ACHN (cell line): ENCODE measurements at regions of chr11 and their contacts with region 1.

Region 1: GRCh38 chr11:128630367-128631230 is 43.2 kb upstream of the ETS1 start:
- DNase-seq: peak; percentile 69

Region 2: DNA sequence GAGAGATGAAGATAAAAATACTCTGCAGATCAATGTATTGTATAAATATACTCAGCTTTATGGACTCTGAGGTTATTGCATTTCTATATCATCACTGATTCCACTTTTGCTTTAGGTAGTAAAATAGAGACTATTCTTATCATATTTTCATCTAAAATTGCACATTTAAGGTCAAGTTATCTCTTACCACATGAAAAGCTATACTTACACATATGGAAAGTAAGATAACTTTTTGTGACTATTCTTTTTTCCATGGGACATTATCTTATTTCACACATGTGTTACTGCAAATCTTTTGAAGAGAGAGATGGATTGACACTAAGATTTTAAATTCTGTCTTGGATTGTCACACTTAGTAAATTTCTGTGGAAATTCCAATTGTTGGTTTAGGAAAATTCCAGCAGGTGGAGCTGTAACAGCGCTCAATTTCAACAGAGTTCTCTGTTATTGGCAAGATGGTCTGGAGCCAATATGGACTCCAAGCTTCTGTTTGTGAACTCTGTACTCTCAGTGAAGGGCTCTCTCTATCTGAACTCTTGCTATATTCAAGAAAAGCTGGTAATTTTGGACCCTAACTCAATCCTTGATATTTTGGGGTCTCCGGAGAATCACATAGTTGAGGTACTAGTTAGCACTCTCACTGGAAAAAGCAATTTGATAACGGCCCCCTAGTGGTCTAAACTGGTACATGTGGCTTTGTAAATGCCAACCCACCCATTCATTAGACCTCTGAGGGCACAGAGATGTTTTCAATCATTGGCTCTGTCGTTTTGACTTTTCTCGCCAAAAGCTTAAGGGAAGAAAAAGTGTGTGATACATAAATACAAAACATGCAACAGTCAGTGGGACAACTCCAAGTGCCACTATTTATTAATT is 472.9 kb before region 1 on chr11:
- in situ Hi-C with region 1: loop called (anchors 25 kb)
- DNase-seq: peak; percentile 73

Region 3: GRCh38 chr11:128669506-128670270 is 39.1 kb after region 1 on chr11:
- in situ Hi-C with region 1: no loop called
- DNase-seq: no peak

Region 4: GRCh38 chr11:128776424-128777284 is 146.1 kb after region 1 on chr11:
- in situ Hi-C with region 1: no loop called
- DNase-seq: peak; percentile 22